ENCODE measurements at regions of chr7 and their contacts with region 1.

Region 1: GRCh38 chr7:38728145-38728544 is 97.0 kb upstream of the AMPH start:
- DNase-seq: no peak
- H3K4me3 ChIP-seq: no peak overlapping the region
- H3K27ac ChIP-seq: no peak overlapping the region
- H3K4me1 ChIP-seq: no peaks in the 10 kb centered on the region
- H3K27me3 ChIP-seq: no peaks in the 10 kb centered on the region
- CTCF ChIP-seq: no peak
- EP300 ChIP-seq: no peak
- POLR2A ChIP-seq: no peak

Region 2: GRCh38 chr7:38660427-38661099 is 67.6 kb before region 1 on chr7:
- in situ Hi-C with region 1: no loop called
- intact Hi-C with region 1: no loop called
- DNase-seq: peak; percentile 18
- H3K4me3 ChIP-seq: no peak overlapping the region
- H3K27ac ChIP-seq: no peak overlapping the region
- H3K4me1 ChIP-seq: no peaks in the 10 kb centered on the region
- H3K27me3 ChIP-seq: no peaks in the 10 kb centered on the region
- CTCF ChIP-seq: peak; percentile 62 to 71 (median 63)
- EP300 ChIP-seq: no peak
- POLR2A ChIP-seq: no peak

Region 3: GRCh38 chr7:38744746-38745145 is 16.6 kb after region 1 on chr7:
- in situ Hi-C with region 1: no loop called
- intact Hi-C with region 1: loop called (anchors 1 kb)
- DNase-seq: no peak
- H3K4me3 ChIP-seq: no peak overlapping the region
- H3K27ac ChIP-seq: no peak overlapping the region
- H3K4me1 ChIP-seq: no peaks in the 10 kb centered on the region
- H3K27me3 ChIP-seq: no peaks in the 10 kb centered on the region
- CTCF ChIP-seq: no peak
- EP300 ChIP-seq: no peak
- POLR2A ChIP-seq: no peak